Gastrocnemius medialis (tissue), 4 donors: ENCODE measurements at regions of chr16 and their contacts with region 1.

Region 1: GRCh38 chr16:29900102-29900887 is at the start of gene ASPHD1:
- DNase-seq: peak in 1 of 2 donors; percentile 17
- ATAC-seq: peak; percentile 81 to 86
- H3K4me3 ChIP-seq: peak within 1 kb of the TSS; percentile 45 to 62 (median 58)
- H3K27ac ChIP-seq: no peak within 1 kb of the TSS
- H3K4me1 ChIP-seq: peaks cover 0 to 5% of the 10 kb centered on the region in 2 donors
- H3K27me3 ChIP-seq: peaks cover 35 to 42% (median 38%) of the 10 kb centered on the region in 3 donors
- CTCF ChIP-seq: no peak
- POLR2A ChIP-seq: no peak
- total RNA-seq, gene ASPHD1: not detected

Region 2: GRCh38 chr16:29738514-29738913 is 161.8 kb before region 1 on chr16:
- in situ Hi-C with region 1: no loop called
- intact Hi-C with region 1: no loop called
- DNase-seq: no peak
- ATAC-seq: no peak
- H3K4me3 ChIP-seq: no peak overlapping the region
- H3K27ac ChIP-seq: no peak overlapping the region
- H3K4me1 ChIP-seq: no peaks in the 10 kb centered on the region
- H3K27me3 ChIP-seq: no peaks in the 10 kb centered on the region
- CTCF ChIP-seq: no peak
- POLR2A ChIP-seq: no peak

Region 3: DNA sequence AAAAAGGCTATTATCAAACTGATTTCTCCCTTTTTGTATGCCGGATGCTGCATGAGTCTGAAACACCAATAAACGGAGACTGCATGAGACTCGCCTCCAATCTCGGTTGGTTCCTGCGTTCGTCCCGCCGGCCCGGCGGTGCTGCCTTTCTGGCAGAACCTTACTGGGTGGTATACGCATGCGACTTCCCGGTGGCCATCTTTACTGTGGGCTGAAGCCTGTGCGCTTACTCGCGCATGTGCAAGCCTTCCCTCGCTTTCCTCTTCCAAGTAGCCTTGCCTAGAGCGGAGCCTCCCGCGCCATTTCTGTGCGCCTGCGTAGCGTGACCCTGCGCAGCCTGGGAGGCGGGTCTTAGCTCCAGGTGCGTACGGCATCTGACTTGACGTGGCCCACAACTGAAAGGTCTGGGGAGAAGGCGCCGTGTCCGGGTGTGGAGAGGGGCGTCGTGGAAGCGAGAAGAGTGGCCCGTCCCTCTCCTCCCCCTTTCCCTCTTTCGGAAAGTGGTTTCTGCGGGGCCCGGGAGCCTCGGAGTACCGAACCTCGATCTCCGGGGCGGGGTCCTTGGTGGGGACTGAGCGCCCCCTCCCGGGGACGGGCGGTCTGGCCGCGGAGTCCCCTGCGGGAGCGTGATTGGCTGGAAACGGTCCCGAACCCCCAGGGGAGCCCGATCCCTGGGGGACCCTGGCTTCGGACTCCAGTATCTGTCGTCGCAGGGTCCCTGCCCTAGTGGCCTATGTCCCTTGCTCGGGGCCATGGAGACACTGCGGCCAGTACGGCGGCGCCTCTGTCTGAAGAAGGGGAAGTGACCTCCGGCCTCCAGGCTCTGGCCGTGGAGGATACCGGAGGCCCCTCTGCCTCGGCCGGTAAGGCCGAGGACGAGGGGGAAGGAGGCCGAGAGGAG is 84.3 kb before region 1 on chr16 and contains the start of gene PAGR1:
- in situ Hi-C with region 1: no loop called
- intact Hi-C with region 1: no loop called
- DNase-seq: peak; percentile 98 to 99
- ATAC-seq: peak; percentile 79 to 83
- H3K4me3 ChIP-seq: peak within 1 kb of the TSS; percentile 78 to 96 (median 90)
- H3K27ac ChIP-seq: peak within 1 kb of the TSS; percentile 91 to 99 (median 95)
- H3K4me1 ChIP-seq: peaks cover 44 to 53% of the 10 kb centered on the region in 2 donors
- H3K27me3 ChIP-seq: no peaks in the 10 kb centered on the region
- CTCF ChIP-seq: peak; percentile 95 to 97 (median 95)
- POLR2A ChIP-seq: peak; percentile 66 to 72
- total RNA-seq, gene PAGR1: 15.5 to 29.2 (median 21.7) TPM

Region 4: GRCh38 chr16:29862884-29863668 is 37.2 kb before region 1 on chr16 and contains the start of gene CDIPT:
- in situ Hi-C with region 1: no loop called
- intact Hi-C with region 1: loop called (anchors 1 kb)
- DNase-seq: peak; percentile 92 to 94
- ATAC-seq: peak; percentile 99
- H3K4me3 ChIP-seq: peak within 1 kb of the TSS; percentile 78 to 98 (median 80)
- H3K27ac ChIP-seq: peak within 1 kb of the TSS; percentile 87 to 96 (median 93)
- H3K4me1 ChIP-seq: peaks cover 18 to 20% of the 10 kb centered on the region in 2 donors
- H3K27me3 ChIP-seq: no peaks in the 10 kb centered on the region
- CTCF ChIP-seq: peak; percentile 32 to 64 (median 57)
- POLR2A ChIP-seq: peak; percentile 36 to 41
- total RNA-seq, gene CDIPT: 35.5 to 71.8 (median 55.7) TPM

Region 5: GRCh38 chr16:30355144-30355894 is 455.0 kb after region 1 on chr16 and contains the start of gene CD2BP2:
- in situ Hi-C with region 1: no loop called
- intact Hi-C with region 1: loop called (anchors 5 kb)
- DNase-seq: peak; percentile 96 to 97
- ATAC-seq: peak; percentile 91 to 92
- H3K4me3 ChIP-seq: peak within 1 kb of the TSS; percentile 96 to 100 (median 97)
- H3K27ac ChIP-seq: peak within 1 kb of the TSS; percentile 92 to 97 (median 94)
- H3K4me1 ChIP-seq: peaks cover 43 to 48% of the 10 kb centered on the region in 2 donors
- H3K27me3 ChIP-seq: no peaks in the 10 kb centered on the region
- CTCF ChIP-seq: no peak
- POLR2A ChIP-seq: peak; percentile 46
- total RNA-seq, gene CD2BP2: 33.4 to 53.8 (median 40.9) TPM